ENCODE measurements at regions of chr1 and their contacts with region 1.

Region 1: GRCh38 chr1:209926045-209926444 is 12.0 kb upstream of the SYT14 start:
- DNase-seq: no peak
- H3K4me3 Mint-ChIP-seq: no peak overlapping the region
- H3K27ac Mint-ChIP-seq: no peak overlapping the region
- H3K4me1 Mint-ChIP-seq: peaks cover 12% of the 10 kb centered on the region
- H3K27me3 Mint-ChIP-seq: no peaks in the 10 kb centered on the region
- CTCF ChIP-seq: no peak

Region 2: GRCh38 chr1:209884665-209885117 is 41.4 kb before region 1 on chr1:
- CTCF ChIA-PET with region 1: no interaction called
- intact Hi-C with region 1: loop called (anchors 5 kb)
- DNase-seq: peak; percentile 95
- H3K4me3 Mint-ChIP-seq: peak overlapping the region; percentile 48
- H3K27ac Mint-ChIP-seq: peak overlapping the region; percentile 92
- H3K4me1 Mint-ChIP-seq: peaks cover 72% of the 10 kb centered on the region
- H3K27me3 Mint-ChIP-seq: no peaks in the 10 kb centered on the region
- CTCF ChIP-seq: no peak